IMR-90 (cell line): ENCODE measurements at regions of chr4 and their contacts with region 1.

Region 1: DNA sequence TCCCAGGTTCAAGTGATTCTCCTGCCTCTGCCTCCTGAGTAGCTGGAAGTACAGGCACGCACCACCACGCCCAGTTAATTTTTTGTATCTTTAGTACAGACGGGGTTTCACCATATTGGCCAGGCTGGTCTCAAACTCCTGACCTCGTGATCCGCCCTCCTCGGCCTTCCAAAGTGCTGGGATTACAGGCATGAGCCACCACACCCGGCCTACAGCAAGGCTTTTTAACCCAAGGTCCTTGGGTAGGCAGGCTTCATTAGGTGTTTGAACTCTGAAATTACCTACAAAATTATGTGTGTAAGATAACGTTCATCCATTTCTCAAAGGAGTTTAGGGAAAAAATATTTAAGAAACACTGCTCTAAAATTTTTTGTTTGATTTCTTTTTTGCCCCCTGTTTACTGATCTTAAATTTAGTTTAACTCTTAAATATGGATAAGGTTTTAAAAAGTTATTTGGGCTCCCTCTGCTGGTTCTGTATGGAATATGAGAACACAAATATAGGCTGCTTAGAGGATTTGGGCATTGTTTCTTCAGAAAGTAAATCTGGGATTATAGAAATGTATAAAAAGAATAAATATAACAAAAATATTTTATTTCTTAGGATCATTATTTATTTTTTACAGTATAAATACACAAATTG is 92.8 kb downstream of the CBR4 start:
- DNase-seq: peak; percentile 54
- ATAC-seq: peak; percentile 46
- H3K4me3 ChIP-seq: no peak overlapping the region
- H3K27ac ChIP-seq: no peak overlapping the region
- H3K4me1 ChIP-seq: peaks cover 2% of the 10 kb centered on the region; the same call in 1 of the 2 replicates
- H3K27me3 ChIP-seq: no peaks in the 10 kb centered on the region
- CTCF ChIP-seq: peak; percentile 52
- POLR2A ChIP-seq: no peak
- RAD21 ChIP-seq: peak; percentile 50

Region 2: DNA sequence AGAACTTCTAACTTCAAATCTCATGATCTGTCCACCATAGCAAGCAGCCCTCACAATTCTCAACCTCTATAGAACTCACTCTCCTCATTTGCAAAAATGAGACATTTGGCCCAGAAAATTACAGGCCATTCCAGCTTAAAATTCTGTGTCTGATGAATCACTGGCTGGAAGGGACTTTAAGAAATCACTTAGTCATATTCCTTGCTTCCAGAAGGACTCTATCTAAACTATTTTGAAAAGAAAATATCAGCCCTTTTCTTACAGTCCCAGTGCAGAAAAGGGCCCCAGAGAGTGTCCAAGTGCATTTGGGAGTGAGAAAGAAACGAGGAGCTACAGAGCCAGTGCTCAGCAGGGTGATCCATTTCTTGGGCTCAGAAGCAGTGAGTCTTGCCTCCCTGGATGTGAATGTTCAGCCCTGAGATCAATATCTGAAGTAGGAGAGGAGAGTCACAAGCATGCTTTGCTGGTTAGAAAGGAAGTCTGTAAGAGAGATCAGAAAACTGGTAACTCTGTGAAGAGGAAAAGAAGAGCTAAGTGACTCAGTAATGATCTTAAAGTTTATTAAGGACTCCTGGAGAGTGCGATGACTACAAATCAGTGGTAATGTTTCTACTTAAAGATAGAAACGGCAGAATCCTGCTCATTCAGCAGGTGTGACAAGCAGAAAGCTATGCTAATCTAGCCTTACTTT is 280.6 kb before region 1 on chr4:
- CTCF ChIA-PET with region 1: interaction called, 3 read pairs
- POLR2A ChIA-PET with region 1: no interaction called
- dilution Hi-C with region 1: no loop called
- in situ Hi-C with region 1: no loop called
- intact Hi-C with region 1: loop called (anchors 2 kb)
- DNase-seq: peak; percentile 88
- ATAC-seq: peak; percentile 62
- H3K4me3 ChIP-seq: no peak overlapping the region; the same call in 1 of the 2 replicates
- H3K27ac ChIP-seq: peak overlapping the region; percentile 77
- H3K4me1 ChIP-seq: peaks cover 26% of the 10 kb centered on the region
- H3K27me3 ChIP-seq: no peaks in the 10 kb centered on the region
- CTCF ChIP-seq: no peak
- POLR2A ChIP-seq: 0 out of 2 replicates have a peak, but pooled peaks have one; percentile 36
- RAD21 ChIP-seq: no peak; the same call in 1 of the 2 replicates

Region 3: GRCh38 chr4:168847771-168848511 is 69.3 kb before region 1 on chr4:
- CTCF ChIA-PET with region 1: no interaction called
- POLR2A ChIA-PET with region 1: no interaction called
- dilution Hi-C with region 1: no loop called
- in situ Hi-C with region 1: no loop called
- intact Hi-C with region 1: no loop called
- DNase-seq: no peak
- ATAC-seq: peak; percentile 28
- H3K4me3 ChIP-seq: peak overlapping the region; percentile 24; the same call in 1 of the 2 replicates
- H3K27ac ChIP-seq: peak overlapping the region; percentile 69
- H3K4me1 ChIP-seq: peaks cover 25% of the 10 kb centered on the region
- H3K27me3 ChIP-seq: no peaks in the 10 kb centered on the region
- CTCF ChIP-seq: no peak
- POLR2A ChIP-seq: no peak
- RAD21 ChIP-seq: no peak

Region 4: DNA sequence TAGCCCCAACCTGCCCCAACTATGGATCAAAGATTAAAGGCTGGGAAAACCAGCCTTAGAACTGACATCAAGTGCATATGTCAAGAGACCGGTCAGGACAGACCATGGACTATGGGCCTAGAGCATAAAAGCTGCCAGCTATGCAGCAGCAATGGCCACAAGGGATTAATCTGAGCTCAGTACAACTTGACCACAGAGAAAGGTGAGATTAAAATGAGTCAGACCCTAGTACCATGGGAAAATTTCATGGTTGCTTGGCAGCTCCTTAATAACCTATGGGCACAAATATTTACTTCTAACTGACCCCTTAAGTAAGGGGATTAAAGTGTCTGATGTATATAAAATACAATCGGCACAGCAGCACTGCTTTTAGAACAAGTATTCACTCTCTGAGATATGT is 38.4 kb after region 1 on chr4:
- CTCF ChIA-PET with region 1: no interaction called
- POLR2A ChIA-PET with region 1: no interaction called
- dilution Hi-C with region 1: no loop called
- in situ Hi-C with region 1: no loop called
- intact Hi-C with region 1: no loop called
- DNase-seq: no peak
- ATAC-seq: no peak
- H3K4me3 ChIP-seq: no peak overlapping the region
- H3K27ac ChIP-seq: no peak overlapping the region
- H3K4me1 ChIP-seq: no peaks in the 10 kb centered on the region
- H3K27me3 ChIP-seq: no peaks in the 10 kb centered on the region
- CTCF ChIP-seq: no peak
- POLR2A ChIP-seq: no peak
- RAD21 ChIP-seq: no peak